B cell (primary cell): ENCODE measurements at regions of chr6 and their contacts with region 1.

Region 1: GRCh38 chr6:15327271-15327670 is 81.4 kb downstream of the JARID2 start:
- DNase-seq: peak; percentile 60
- ATAC-seq: peak; percentile 62
- H3K4me3 ChIP-seq: no peak overlapping the region
- H3K4me3 Mint-ChIP-seq: peak overlapping the region; percentile 60
- H3K27ac ChIP-seq: peak overlapping the region in 1 of 2 donors; percentile 38
- H3K27ac Mint-ChIP-seq: peak overlapping the region; percentile 78
- H3K4me1 ChIP-seq: peaks cover 76% of the 10 kb centered on the region in 2 donors
- H3K4me1 Mint-ChIP-seq: peaks cover 91% of the 10 kb centered on the region
- H3K27me3 ChIP-seq: no peaks in the 10 kb centered on the region
- H3K27me3 Mint-ChIP-seq: no peaks in the 10 kb centered on the region
- CTCF ChIP-seq: peak; percentile 19

Region 2: DNA sequence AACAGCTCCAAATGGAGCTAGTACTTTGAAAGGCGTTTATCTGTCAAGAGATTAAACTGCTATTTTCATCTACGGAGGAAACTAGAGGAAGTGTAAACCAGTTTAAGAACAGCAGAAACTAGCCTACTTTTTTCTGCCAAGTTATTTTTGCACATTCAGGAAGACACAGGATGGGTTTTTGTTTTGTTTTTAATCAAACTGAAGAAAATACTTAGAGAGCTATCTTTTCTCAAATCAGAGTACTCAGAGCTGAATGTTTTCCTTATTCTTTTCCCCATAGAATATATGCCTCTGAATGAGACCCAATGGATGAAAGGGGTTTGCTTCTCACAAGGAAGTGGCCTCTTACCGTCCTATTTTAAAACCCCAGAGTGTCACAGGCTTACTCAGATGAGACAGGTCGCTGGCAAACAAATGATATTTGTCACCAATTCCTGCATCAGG is 671.2 kb before region 1 on chr6:
- CTCF ChIA-PET with region 1: no interaction called
- POLR2A ChIA-PET with region 1: no interaction called
- intact Hi-C with region 1: no loop called
- DNase-seq: peak; percentile 66
- ATAC-seq: peak; percentile 26
- H3K4me3 ChIP-seq: peak overlapping the region in 3 of 5 experiments; percentile 5 to 47 (median 11)
- H3K4me3 Mint-ChIP-seq: peak overlapping the region; percentile 77
- H3K27ac ChIP-seq: peak overlapping the region; percentile 98
- H3K27ac Mint-ChIP-seq: peak overlapping the region; percentile 94
- H3K4me1 ChIP-seq: peaks cover 72% of the 10 kb centered on the region in 2 donors
- H3K4me1 Mint-ChIP-seq: peaks cover 36% of the 10 kb centered on the region
- H3K27me3 ChIP-seq: no peaks in the 10 kb centered on the region
- H3K27me3 Mint-ChIP-seq: no peaks in the 10 kb centered on the region
- CTCF ChIP-seq: no peak

Region 3: GRCh38 chr6:14964515-14965270 is 362.6 kb before region 1 on chr6:
- CTCF ChIA-PET with region 1: no interaction called
- POLR2A ChIA-PET with region 1: no interaction called
- intact Hi-C with region 1: no loop called
- DNase-seq: no peak
- ATAC-seq: no peak
- H3K4me3 ChIP-seq: no peak overlapping the region
- H3K4me3 Mint-ChIP-seq: no peak overlapping the region
- H3K27ac ChIP-seq: no peak overlapping the region
- H3K27ac Mint-ChIP-seq: no peak overlapping the region
- H3K4me1 ChIP-seq: no peaks in the 10 kb centered on the region
- H3K4me1 Mint-ChIP-seq: no peaks in the 10 kb centered on the region
- H3K27me3 ChIP-seq: no peaks in the 10 kb centered on the region
- H3K27me3 Mint-ChIP-seq: peaks cover 2% of the 10 kb centered on the region
- CTCF ChIP-seq: no peak

Region 4: DNA sequence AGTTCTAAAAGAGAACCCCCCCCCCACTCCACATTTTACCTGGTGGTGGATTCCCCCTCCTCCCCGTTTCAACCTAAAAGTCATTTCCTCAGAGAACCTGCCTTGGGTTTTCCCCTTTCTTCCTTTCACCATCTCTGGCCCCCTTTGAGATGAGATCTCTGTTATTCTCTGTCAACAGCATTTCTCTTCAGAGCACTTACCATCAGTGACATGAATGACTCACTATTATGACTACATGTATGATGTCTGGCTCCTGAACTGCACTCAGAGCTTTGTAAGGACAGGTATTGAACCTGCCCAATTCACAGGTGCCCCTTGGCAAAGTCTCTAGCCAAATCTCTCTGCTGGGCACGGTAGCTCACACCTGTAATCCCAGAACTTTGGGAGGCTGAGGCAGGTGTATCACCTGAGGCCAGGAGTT is 142.8 kb before region 1 on chr6:
- CTCF ChIA-PET with region 1: no interaction called
- POLR2A ChIA-PET with region 1: no interaction called
- intact Hi-C with region 1: no loop called
- DNase-seq: peak; percentile 27
- ATAC-seq: peak; percentile 54
- H3K4me3 ChIP-seq: no peak overlapping the region
- H3K4me3 Mint-ChIP-seq: no peak overlapping the region
- H3K27ac ChIP-seq: no peak overlapping the region
- H3K27ac Mint-ChIP-seq: peak overlapping the region; percentile 39
- H3K4me1 ChIP-seq: peaks cover 8 to 10% of the 10 kb centered on the region in 2 donors
- H3K4me1 Mint-ChIP-seq: peaks cover 8% of the 10 kb centered on the region
- H3K27me3 ChIP-seq: no peaks in the 10 kb centered on the region
- H3K27me3 Mint-ChIP-seq: no peaks in the 10 kb centered on the region
- CTCF ChIP-seq: no peak

Region 5: DNA sequence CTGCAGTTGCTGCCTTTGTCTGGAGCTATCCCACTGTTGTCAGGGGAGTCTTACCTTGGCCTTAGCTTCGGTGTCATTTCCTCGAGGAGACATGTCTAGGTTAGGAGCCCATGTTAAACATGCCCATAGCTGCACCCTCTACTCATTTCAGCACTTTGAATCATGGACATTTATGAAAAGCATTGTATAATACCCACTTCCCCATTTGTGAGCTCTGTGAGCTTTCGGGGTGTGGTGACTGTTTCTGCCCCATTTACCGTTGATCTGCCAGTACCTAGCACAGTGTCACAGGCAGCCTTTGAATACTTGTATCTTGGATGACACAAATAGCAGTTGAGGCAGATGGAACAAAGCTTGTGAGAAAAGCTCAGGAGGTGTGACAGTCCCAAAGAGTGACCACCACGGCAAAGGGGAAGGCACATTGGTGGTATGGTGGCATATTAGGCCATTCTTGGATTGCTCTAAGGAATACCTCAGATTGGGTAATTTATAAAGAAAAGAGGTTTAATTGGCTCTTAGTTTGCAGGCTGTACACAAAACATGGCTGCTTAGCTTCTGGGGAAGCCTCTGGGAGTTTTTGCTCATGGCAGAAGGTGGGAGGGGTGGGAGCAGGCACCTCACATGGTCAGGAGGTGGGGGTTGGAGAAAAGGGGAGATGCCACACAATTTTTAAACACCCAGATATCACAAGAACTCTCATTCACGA is 39.4 kb before region 1 on chr6:
- CTCF ChIA-PET with region 1: no interaction called
- POLR2A ChIA-PET with region 1: no interaction called
- intact Hi-C with region 1: loop called (anchors 5 kb)
- DNase-seq: peak; percentile 73
- ATAC-seq: peak; percentile 96
- H3K4me3 ChIP-seq: no peak overlapping the region
- H3K4me3 Mint-ChIP-seq: peak overlapping the region; percentile 56
- H3K27ac ChIP-seq: peak overlapping the region in 1 of 2 donors; percentile 23
- H3K27ac Mint-ChIP-seq: peak overlapping the region; percentile 69
- H3K4me1 ChIP-seq: peaks cover 26 to 30% of the 10 kb centered on the region in 2 donors
- H3K4me1 Mint-ChIP-seq: peaks cover 50% of the 10 kb centered on the region
- H3K27me3 ChIP-seq: no peaks in the 10 kb centered on the region
- H3K27me3 Mint-ChIP-seq: no peaks in the 10 kb centered on the region
- CTCF ChIP-seq: no peak

Region 6: DNA sequence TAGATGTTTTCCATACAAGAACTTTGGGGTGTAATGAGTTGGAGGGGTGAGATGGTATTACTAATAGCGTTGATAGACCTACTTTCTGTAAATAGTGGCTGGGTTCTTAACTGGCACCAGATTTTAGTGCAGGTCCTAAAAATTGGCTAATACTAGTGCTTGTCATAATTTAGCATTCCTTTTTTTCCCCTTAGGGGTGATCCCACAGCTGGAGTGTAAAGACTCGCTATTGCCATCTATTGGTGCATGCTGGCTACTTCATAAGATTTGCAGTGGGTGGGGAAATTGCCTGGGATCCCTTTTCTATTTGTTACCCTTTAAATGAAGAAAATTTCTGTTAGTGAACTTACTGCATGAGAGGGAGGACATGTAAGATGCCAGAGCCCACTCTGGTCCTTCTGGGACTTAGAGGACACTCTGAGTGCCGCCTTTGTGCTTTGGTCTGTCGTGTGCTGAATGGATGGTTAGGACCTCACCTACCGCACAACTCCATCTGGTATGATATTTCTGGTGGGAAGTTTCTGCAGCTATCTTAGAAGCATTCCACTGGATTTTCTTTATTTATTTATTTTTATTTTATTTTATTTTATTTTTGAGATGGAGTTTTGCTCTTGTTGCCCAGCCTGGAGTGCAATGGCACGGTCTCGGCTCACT is 114.1 kb after region 1 on chr6:
- CTCF ChIA-PET with region 1: interaction called, 5 read pairs
- POLR2A ChIA-PET with region 1: interaction called, 4 read pairs
- intact Hi-C with region 1: loop called (anchors 10 kb)
- DNase-seq: peak; percentile 67
- ATAC-seq: peak; percentile 58
- H3K4me3 ChIP-seq: no peak overlapping the region
- H3K4me3 Mint-ChIP-seq: no peak overlapping the region
- H3K27ac ChIP-seq: no peak overlapping the region
- H3K27ac Mint-ChIP-seq: peak overlapping the region; percentile 38
- H3K4me1 ChIP-seq: peaks cover 31 to 54% of the 10 kb centered on the region in 2 donors
- H3K4me1 Mint-ChIP-seq: peaks cover 71% of the 10 kb centered on the region
- H3K27me3 ChIP-seq: no peaks in the 10 kb centered on the region
- H3K27me3 Mint-ChIP-seq: no peaks in the 10 kb centered on the region
- CTCF ChIP-seq: peak; percentile 82